Uterus (tissue), 4 donors: ENCODE measurements at regions of chr7 and their contacts with region 1.

Region 1: DNA sequence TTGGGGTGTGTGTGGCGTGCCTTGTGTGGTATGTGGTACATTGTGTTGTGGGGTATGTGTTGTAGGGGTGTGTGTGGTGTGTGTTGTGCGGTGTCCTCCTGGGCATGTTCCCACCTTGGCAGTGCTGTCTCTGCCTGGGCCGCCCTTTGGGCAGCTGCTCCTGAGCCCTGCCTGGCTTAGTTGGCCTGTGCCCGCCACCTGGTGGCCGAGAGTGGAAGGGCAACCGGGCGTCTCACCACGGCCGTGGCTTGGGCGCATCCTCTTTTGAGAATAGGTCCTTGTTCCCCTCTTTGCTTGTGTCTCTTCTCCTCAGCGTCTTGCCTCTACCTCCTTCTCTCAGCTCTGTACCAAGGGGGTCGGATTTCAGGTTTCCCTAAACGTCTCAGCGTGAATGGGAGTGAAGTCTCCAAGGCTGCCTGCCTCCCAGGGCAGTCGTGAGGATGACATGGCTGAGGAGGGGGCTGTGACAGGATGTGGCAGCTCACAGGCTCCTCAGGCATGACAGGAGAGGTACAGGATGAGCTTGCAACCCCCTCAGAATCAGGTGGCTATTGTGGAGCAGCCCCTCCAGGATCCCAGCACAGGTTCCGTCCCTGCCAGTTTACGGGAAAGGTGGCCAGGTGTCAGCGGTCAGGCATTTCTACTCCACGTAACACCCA is 98.4 kb upstream of the PODXL start:
- DNase-seq: peak; percentile 84
- H3K4me3 ChIP-seq: no peak overlapping the region
- H3K27ac ChIP-seq: no peak overlapping the region
- H3K4me1 ChIP-seq: no peaks in the 10 kb centered on the region
- H3K27me3 ChIP-seq: no peaks in the 10 kb centered on the region
- CTCF ChIP-seq: peak; percentile 90 to 97 (median 94)
- POLR2A ChIP-seq: no peak

Region 2: DNA sequence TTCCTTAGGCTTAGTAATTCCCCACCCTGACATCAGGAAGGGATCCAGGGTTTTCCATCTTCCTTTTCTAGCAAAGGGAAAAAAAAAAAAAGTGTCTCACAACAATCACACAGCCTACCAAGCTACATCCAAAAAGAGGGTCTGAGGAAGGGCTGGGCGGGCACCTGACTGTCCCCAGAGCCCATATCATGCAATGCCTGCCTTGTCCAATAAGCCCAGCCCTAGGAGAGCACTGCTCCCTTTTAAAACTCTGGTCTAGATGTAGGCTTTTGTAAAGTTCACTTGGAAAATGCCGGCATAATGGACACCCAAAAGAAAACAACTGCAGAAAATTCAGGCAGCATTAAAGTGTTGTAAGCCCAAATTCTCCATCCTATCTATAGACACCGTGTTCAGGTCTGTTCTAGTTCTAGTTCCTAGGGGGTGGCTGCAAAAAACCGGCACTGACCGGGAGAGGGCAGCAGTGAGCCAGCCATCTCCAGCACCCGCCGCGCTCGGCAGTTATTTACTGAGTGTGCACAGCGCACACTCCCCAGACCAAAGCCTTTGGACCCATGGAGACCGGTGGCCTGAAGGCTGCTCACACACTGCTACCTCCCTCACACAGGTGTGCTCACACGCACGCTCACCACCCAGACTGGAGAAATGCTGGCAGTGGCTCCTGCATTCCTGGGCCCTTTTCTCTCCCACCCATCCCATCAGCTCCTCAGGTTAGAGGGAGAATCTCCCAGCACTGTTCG is 147.0 kb before region 1 on chr7:
- intact Hi-C with region 1: loop called (anchors 5 kb)
- DNase-seq: peak; percentile 84 to 87
- H3K4me3 ChIP-seq: no peak overlapping the region
- H3K27ac ChIP-seq: peak overlapping the region; percentile 23 to 60
- H3K4me1 ChIP-seq: peaks cover 0 to 8% of the 10 kb centered on the region in 2 donors
- H3K27me3 ChIP-seq: no peaks in the 10 kb centered on the region
- CTCF ChIP-seq: peak; percentile 91 to 93 (median 92)
- POLR2A ChIP-seq: no peak

Region 3: DNA sequence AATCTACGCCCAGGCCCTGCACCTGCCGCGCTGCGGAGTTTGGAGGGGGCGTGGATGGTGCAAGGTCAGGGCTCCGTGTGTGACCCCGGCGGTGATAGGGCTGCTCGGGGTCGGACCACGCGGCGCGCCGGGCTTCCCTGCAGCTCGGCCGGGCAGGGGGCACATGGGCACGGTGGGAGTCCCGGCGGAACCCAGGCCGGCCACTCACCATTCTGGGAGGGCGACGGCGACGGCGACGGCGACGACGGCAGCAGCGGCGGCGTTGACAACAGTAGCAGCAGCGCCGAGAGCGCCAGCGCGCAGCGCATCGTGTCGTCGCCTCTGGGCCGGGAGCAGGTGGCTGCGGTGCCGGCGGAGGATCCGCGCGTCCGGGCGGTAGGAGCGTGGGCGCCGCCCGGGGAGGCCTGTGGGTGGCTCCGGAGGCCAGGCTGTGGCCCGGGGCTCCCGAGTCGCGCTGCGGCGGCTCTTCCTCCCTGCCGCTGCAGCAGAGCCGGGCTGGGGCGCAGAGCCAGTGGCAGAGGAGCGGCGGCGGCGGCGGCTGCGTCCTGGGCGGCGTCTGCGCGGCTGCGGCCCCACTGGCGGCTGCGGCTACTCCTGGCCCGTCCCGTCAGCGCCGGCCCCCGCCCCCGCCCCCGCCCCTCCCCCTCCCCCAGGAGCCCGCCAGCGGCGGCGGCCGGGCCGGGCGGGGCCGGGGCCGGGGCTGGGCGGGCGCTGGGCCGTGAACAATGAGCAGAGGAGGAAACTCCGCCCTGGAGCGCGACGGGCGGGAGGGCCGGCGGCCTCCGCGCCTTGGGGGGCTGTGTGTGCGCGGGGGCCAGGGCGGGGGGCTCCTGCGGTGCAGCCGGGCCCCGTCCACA is 98.5 kb before region 1 on chr7 and contains the start of gene PODXL:
- intact Hi-C with region 1: loop called (anchors 10 kb)
- DNase-seq: peak; percentile 63 to 66
- H3K4me3 ChIP-seq: peak within 1 kb of the TSS; percentile 56 to 57
- H3K27ac ChIP-seq: peak within 1 kb of the TSS; percentile 70 to 71
- H3K4me1 ChIP-seq: peaks cover 0 to 8% of the 10 kb centered on the region in 2 donors
- H3K27me3 ChIP-seq: no peaks in the 10 kb centered on the region
- CTCF ChIP-seq: peak in 1 of 4 experiments; percentile 14
- POLR2A ChIP-seq: peak; percentile 53 to 77
- total RNA-seq, gene PODXL: 33.6 to 135 (median 36.1) TPM